Esophagus squamous epithelium (tissue), 5 donors: ENCODE measurements at regions of chr7 and their contacts with region 1.

Region 1: DNA sequence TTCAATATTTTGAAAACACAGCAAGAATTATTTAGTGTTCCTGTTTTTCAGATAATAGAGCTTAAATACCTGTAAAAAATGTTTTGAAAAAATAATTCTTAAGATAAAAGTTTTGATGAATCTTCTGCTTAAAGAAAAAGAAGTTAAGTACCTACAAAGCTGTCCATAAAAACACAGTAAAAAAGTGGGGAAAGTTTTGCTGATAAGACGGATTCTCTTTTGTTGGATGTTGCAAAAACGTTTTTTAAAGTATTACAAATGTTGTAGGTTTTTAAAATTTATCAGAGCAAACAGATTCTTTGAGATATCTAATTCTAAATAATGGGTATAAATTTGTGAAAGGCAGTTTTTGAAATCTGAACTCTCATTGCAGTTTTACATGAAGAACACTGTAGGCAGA is 12.2 kb downstream of the DMTF1 start:
- DNase-seq: no peak
- H3K4me3 ChIP-seq: no peak overlapping the region
- H3K27ac ChIP-seq: no peak overlapping the region
- H3K4me1 ChIP-seq: peaks cover 0 to 11% (median 0%) of the 10 kb centered on the region in 3 donors
- H3K27me3 ChIP-seq: no peaks in the 10 kb centered on the region
- CTCF ChIP-seq: no peak
- POLR2A ChIP-seq: no peak

Region 2: DNA sequence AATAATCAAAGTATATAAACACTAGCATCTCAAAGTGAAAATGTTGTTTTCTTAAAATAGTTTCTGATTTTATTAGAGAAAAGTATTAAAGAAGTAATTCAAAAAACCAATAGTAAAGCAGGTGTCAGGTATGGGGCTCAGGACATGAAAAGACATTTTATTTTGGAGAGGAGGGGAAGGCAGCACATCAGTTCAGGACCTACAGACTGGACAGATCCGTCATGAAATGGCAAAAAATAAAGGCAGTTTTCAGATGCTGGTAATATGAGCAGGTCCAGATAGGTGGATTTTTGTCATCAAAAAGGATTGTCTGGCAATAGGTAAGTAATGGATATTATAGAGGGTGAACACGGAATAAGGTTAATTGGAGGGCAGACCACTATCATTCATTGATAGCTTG is 471.7 kb before region 1 on chr7:
- intact Hi-C with region 1: no loop called
- DNase-seq: no peak
- H3K4me3 ChIP-seq: no peak overlapping the region
- H3K27ac ChIP-seq: no peak overlapping the region
- H3K4me1 ChIP-seq: no peaks in the 10 kb centered on the region
- H3K27me3 ChIP-seq: no peaks in the 10 kb centered on the region
- CTCF ChIP-seq: no peak
- POLR2A ChIP-seq: no peak

Region 3: GRCh38 chr7:87100326-87100725 is 64.1 kb before region 1 on chr7:
- intact Hi-C with region 1: no loop called
- DNase-seq: no peak
- H3K4me3 ChIP-seq: no peak overlapping the region
- H3K27ac ChIP-seq: no peak overlapping the region
- H3K4me1 ChIP-seq: no peaks in the 10 kb centered on the region
- H3K27me3 ChIP-seq: no peaks in the 10 kb centered on the region
- CTCF ChIP-seq: no peak
- POLR2A ChIP-seq: no peak

Region 4: DNA sequence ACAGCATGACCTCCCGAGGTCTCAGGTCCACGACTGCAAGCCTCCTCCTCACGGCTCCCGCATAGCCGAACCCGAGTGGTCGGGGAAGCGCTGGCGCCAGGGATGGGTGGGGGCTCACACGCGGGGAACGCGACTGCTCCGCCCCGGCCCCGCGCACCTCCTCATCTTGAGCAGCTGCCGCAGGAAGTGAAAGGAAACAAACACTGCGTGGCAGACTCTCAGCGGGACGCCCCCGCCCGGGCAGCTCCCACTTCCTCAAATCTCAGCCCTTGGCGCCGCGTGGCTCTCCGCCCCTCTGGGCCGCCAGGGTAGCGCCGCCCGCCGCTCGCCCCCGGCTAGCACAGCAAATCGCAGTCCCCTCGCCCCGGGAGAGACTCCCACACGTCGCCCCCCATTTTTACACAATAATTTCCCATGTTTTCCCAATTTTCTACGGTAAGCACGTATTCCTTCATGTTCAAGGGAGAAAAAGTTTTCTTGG is 55.2 kb after region 1 on chr7 and contains the start of gene TMEM243:
- intact Hi-C with region 1: loop called (anchors 10 kb)
- DNase-seq: peak; percentile 17
- H3K4me3 ChIP-seq: peak within 1 kb of the TSS; percentile 66 to 95 (median 81)
- H3K27ac ChIP-seq: peak within 1 kb of the TSS; percentile 82 to 94 (median 88)
- H3K4me1 ChIP-seq: peaks cover 0 to 49% (median 11%) of the 10 kb centered on the region in 3 donors
- H3K27me3 ChIP-seq: peaks cover 0 to 7% (median 0%) of the 10 kb centered on the region in 4 donors
- CTCF ChIP-seq: peak in 2 of 6 experiments; percentile 18 to 23
- POLR2A ChIP-seq: peak in 2 of 4 donors; percentile 42 to 82
- total RNA-seq, gene TMEM243: 8.9 to 42.2 (median 19.1) TPM